ENCODE measurements at regions of chr14 and their contacts with region 1.

Region 1: GRCh38 chr14:101194373-101195308 is 291.1 kb upstream of the RTL1 start:
- DNase-seq: no peak
- ATAC-seq: no peak
- H3K4me3 ChIP-seq: no peak overlapping the region
- H3K27ac ChIP-seq: no peak overlapping the region
- H3K4me1 ChIP-seq: no peaks in the 10 kb centered on the region
- H3K27me3 ChIP-seq: peaks cover 16 to 55% of the 10 kb centered on the region in 2 experiments
- CTCF ChIP-seq: no peak
- EP300 ChIP-seq: no peak
- POLR2A ChIP-seq: no peak
- RAD21 ChIP-seq: no peak

Region 2: GRCh38 chr14:101128478-101129321 is 65.9 kb before region 1 on chr14:
- CTCF ChIA-PET with region 1: no interaction called
- POLR2A ChIA-PET with region 1: no interaction called
- in situ Hi-C with region 1: no loop called
- intact Hi-C with region 1: no loop called
- DNase-seq: no peak
- ATAC-seq: no peak
- H3K4me3 ChIP-seq: no peak overlapping the region
- H3K27ac ChIP-seq: no peak overlapping the region
- H3K4me1 ChIP-seq: no peaks in the 10 kb centered on the region
- H3K27me3 ChIP-seq: peaks cover 4 to 41% of the 10 kb centered on the region in 2 experiments; a peak in 3 of 5 replicates
- CTCF ChIP-seq: no peak
- EP300 ChIP-seq: no peak
- POLR2A ChIP-seq: no peak
- RAD21 ChIP-seq: no peak

Region 3: GRCh38 chr14:101219896-101220703 is 25.5 kb after region 1 on chr14:
- CTCF ChIA-PET with region 1: no interaction called
- POLR2A ChIA-PET with region 1: no interaction called
- in situ Hi-C with region 1: no loop called
- intact Hi-C with region 1: loop called (anchors 1 kb)
- DNase-seq: no peak
- ATAC-seq: no peak
- H3K4me3 ChIP-seq: no peak overlapping the region
- H3K27ac ChIP-seq: no peak overlapping the region
- H3K4me1 ChIP-seq: peaks cover 67% of the 10 kb centered on the region
- H3K27me3 ChIP-seq: peaks cover 0 to 7% of the 10 kb centered on the region in 2 experiments; a peak in 3 of 5 replicates
- CTCF ChIP-seq: no peak
- EP300 ChIP-seq: no peak
- POLR2A ChIP-seq: no peak
- RAD21 ChIP-seq: no peak

Measured in HepG2 (cell line).